ENCODE measurements at regions of chr20 and their contacts with region 1.

Region 1: GRCh38 chr20:37081717-37082289 is 14.0 kb downstream of the RBL1 start:
- DNase-seq: peak in 7 of 9 donors; percentile 21 to 64 (median 54)
- ATAC-seq: peak; percentile 61
- H3K4me3 ChIP-seq: no peak overlapping the region
- H3K4me3 Mint-ChIP-seq: peak overlapping the region in 3 of 10 donors; percentile 5 to 42 (median 17)
- H3K27ac ChIP-seq: no peak overlapping the region
- H3K27ac Mint-ChIP-seq: peak overlapping the region; percentile 62 to 89 (median 82)
- H3K4me1 ChIP-seq: peaks cover 12% of the 10 kb centered on the region in 2 donors
- H3K4me1 Mint-ChIP-seq: peaks cover 2 to 37% (median 29%) of the 10 kb centered on the region in 7 donors
- H3K27me3 ChIP-seq: no peaks in the 10 kb centered on the region
- H3K27me3 Mint-ChIP-seq: no peaks in the 10 kb centered on the region

Region 2: DNA sequence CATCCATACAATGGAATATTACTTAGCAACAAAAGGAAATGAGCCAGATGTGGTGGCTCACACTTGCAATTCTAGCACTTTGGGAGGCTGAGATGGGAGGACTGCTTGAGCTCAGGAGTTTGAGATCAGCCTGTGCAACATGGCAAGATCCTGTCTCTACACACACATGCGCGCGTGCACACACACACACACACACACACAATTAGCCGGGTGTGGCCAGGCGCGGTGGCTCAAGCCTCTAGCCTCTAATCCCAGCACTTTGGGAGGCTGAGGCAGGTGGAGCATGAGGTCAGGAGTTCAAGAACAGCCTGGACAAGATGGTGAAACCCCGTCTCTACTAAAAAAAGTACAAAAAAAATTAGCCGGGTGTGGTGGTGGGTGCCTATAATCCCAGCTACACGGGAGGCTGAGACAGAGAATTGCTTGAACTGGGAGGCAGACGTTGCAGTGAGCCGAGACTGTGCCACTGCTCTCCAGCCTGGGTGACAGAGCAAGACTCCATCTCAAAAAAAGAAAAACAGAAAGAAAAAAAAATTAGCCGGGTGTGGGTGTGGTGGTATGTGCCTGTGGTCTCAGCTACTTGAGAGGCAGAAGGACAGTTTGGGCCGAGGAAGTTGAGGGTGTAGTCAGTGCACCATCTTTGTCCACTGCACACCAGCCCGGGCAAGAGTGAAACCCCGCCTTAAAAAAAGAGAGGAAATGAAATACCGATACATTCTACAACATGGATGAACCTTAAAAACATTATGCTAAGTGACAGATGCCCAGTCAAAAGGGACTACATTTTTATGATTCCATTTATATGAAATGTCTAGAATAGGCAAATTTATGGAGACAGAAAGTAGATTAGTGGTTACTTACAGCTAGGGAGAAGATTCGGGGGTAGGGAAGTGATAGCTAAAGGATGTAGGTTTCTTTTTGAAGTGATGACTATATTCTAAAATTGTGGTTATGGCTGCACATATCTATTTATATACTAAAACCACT is 38.5 kb before region 1 on chr20:
- CTCF ChIA-PET with region 1: interaction called, 3 read pairs
- POLR2A ChIA-PET with region 1: no interaction called
- intact Hi-C with region 1: loop called in 1 of 2 experiments (anchors 1 kb)
- DNase-seq: peak in 8 of 9 donors; percentile 13 to 48 (median 38)
- ATAC-seq: peak; percentile 76
- H3K4me3 ChIP-seq: peak overlapping the region; percentile 67
- H3K4me3 Mint-ChIP-seq: peak overlapping the region; percentile 81 to 97 (median 87)
- H3K27ac ChIP-seq: peak overlapping the region; percentile 59
- H3K27ac Mint-ChIP-seq: peak overlapping the region; percentile 78 to 99 (median 93)
- H3K4me1 ChIP-seq: peaks cover 14 to 17% of the 10 kb centered on the region in 2 donors
- H3K4me1 Mint-ChIP-seq: peaks cover 6 to 38% (median 32%) of the 10 kb centered on the region in 7 donors
- H3K27me3 ChIP-seq: no peaks in the 10 kb centered on the region
- H3K27me3 Mint-ChIP-seq: no peaks in the 10 kb centered on the region

Region 3: GRCh38 chr20:37071481-37071911 is 10.3 kb before region 1 on chr20:
- CTCF ChIA-PET with region 1: interaction called, 11 read pairs
- POLR2A ChIA-PET with region 1: no interaction called
- intact Hi-C with region 1: loop called in 1 of 2 experiments (anchors 1 kb)
- DNase-seq: peak in 6 of 9 donors; percentile 13 to 31 (median 21)
- ATAC-seq: peak; percentile 48
- H3K4me3 ChIP-seq: no peak overlapping the region
- H3K4me3 Mint-ChIP-seq: peak overlapping the region; percentile 39 to 69 (median 57)
- H3K27ac ChIP-seq: peak overlapping the region; percentile 49
- H3K27ac Mint-ChIP-seq: peak overlapping the region; percentile 80 to 93 (median 87)
- H3K4me1 ChIP-seq: peaks cover 14 to 19% of the 10 kb centered on the region in 2 donors
- H3K4me1 Mint-ChIP-seq: peaks cover 14 to 33% (median 29%) of the 10 kb centered on the region in 7 donors
- H3K27me3 ChIP-seq: no peaks in the 10 kb centered on the region
- H3K27me3 Mint-ChIP-seq: no peaks in the 10 kb centered on the region

Region 4: GRCh38 chr20:38725931-38726803 is 1644.4 kb after region 1 on chr20:
- CTCF ChIA-PET with region 1: no interaction called
- POLR2A ChIA-PET with region 1: no interaction called
- intact Hi-C with region 1: no loop called
- DNase-seq: peak in 4 of 9 donors; percentile 16 to 42 (median 32)
- ATAC-seq: peak; percentile 18
- H3K4me3 ChIP-seq: no peak overlapping the region
- H3K4me3 Mint-ChIP-seq: peak overlapping the region; percentile 4 to 75 (median 60)
- H3K27ac ChIP-seq: no peak overlapping the region
- H3K27ac Mint-ChIP-seq: peak overlapping the region in 6 of 9 donors; percentile 37 to 81 (median 66)
- H3K4me1 ChIP-seq: peaks cover 24 to 47% of the 10 kb centered on the region in 2 donors
- H3K4me1 Mint-ChIP-seq: peaks cover 54 to 67% (median 62%) of the 10 kb centered on the region in 7 donors
- H3K27me3 ChIP-seq: peaks cover 43 to 46% of the 10 kb centered on the region in 2 donors
- H3K27me3 Mint-ChIP-seq: peaks cover 81 to 96% (median 87%) of the 10 kb centered on the region in 5 donors